ENCODE measurements at regions of chr3 and their contacts with region 1.

Region 1: DNA sequence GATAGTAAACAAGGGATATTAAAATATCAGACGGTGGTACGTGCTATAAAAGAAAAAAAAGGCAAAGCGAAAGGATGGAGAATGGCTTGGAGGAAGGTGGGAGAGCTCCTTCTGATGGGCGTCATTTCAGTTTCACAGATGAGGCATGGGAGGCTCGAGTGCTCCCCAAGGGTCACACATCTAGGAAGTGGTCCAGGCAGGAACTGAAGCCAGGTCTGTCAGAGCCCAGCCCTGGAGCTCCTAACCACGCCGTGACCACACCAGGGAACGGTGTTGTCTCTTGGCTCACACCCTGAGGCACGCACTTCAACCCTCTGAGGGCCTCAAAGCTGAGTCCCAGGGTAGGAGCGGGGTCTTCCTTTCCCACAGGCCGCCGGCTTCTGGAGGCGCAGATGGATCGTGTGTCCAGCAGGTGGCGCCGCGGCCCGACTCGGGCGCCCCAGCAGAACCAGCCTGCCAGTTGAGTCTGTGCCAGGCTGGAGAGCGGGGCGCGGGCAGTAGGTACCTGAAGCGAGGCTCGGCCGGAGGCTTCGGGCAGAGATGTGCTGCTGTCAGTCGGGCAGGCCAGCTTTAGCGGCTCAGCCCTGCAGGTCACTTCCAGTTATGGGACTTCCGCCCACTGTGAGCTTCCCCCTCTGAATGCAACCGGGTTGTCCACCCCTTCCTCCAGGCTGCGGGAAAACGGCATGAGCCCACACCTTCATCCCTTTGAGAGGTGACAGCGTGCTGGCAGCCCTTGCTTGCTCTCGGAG is 68.1 kb downstream of the SLC6A1 start:
- DNase-seq: peak; percentile 50
- ATAC-seq: peak; percentile 69
- H3K4me3 ChIP-seq: 0 out of 2 replicates have a peak overlapping the region, but pooled peaks have one; percentile 9
- H3K27ac ChIP-seq: no peak overlapping the region
- H3K4me1 ChIP-seq: peaks cover 4% of the 10 kb centered on the region; the same call in 1 of the 2 replicates
- H3K27me3 ChIP-seq: peaks cover 12% of the 10 kb centered on the region
- CTCF ChIP-seq: peak; percentile 89
- POLR2A ChIP-seq: no peak
- RAD21 ChIP-seq: peak; percentile 92

Region 2: GRCh38 chr3:9416139-9416780 is 1644.4 kb before region 1 on chr3:
- CTCF ChIA-PET with region 1: no interaction called
- POLR2A ChIA-PET with region 1: no interaction called
- dilution Hi-C with region 1: no loop called
- in situ Hi-C with region 1: no loop called
- intact Hi-C with region 1: no loop called
- DNase-seq: peak; percentile 43
- ATAC-seq: peak; percentile 71
- H3K4me3 ChIP-seq: no peak overlapping the region
- H3K27ac ChIP-seq: peak overlapping the region; percentile 41; the same call in 1 of the 2 replicates
- H3K4me1 ChIP-seq: peaks cover 11% of the 10 kb centered on the region
- H3K27me3 ChIP-seq: no peaks in the 10 kb centered on the region
- CTCF ChIP-seq: no peak
- POLR2A ChIP-seq: no peak
- RAD21 ChIP-seq: no peak

Region 3: DNA sequence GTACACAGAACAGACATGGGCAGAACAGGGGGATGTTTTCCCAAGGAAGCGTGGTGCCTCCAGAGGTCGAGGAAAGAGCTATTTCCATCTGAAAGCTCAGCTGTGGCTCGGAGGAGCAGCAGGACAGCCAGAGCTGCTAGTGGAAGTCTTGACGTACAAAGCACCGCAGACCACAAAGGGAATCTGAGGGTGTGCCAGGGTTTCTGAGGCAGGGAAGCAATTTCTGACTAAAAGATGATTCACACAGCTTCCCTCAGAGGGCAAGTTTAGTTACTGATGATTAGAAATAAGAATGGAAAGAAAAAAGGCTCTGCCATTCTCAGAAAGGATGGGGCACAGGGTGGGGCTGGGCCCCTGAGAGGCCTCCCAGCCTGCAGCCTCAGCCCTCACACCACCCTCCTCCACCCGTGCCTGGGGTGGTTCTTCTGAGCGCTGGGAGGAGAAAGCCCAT is 694.0 kb before region 1 on chr3:
- CTCF ChIA-PET with region 1: no interaction called
- POLR2A ChIA-PET with region 1: no interaction called
- dilution Hi-C with region 1: no loop called
- in situ Hi-C with region 1: no loop called
- intact Hi-C with region 1: no loop called
- DNase-seq: peak; percentile 100
- ATAC-seq: peak; percentile 86
- H3K4me3 ChIP-seq: no peak overlapping the region
- H3K27ac ChIP-seq: peak overlapping the region; percentile 42
- H3K4me1 ChIP-seq: peaks cover 21% of the 10 kb centered on the region
- H3K27me3 ChIP-seq: no peaks in the 10 kb centered on the region
- CTCF ChIP-seq: 0 out of 2 replicates have a peak, but pooled peaks have one; percentile 23
- POLR2A ChIP-seq: 0 out of 2 replicates have a peak, but pooled peaks have one; percentile 22
- RAD21 ChIP-seq: peak; percentile 37

Region 4: GRCh38 chr3:10758304-10759061 is 302.2 kb before region 1 on chr3:
- CTCF ChIA-PET with region 1: interaction called, 13 read pairs
- POLR2A ChIA-PET with region 1: no interaction called
- dilution Hi-C with region 1: no loop called
- in situ Hi-C with region 1: loop called (anchors 5 kb)
- intact Hi-C with region 1: loop called (anchors 1 kb)
- DNase-seq: peak; percentile 66
- ATAC-seq: peak; percentile 98
- H3K4me3 ChIP-seq: no peak overlapping the region
- H3K27ac ChIP-seq: no peak overlapping the region
- H3K4me1 ChIP-seq: no peaks in the 10 kb centered on the region
- H3K27me3 ChIP-seq: peaks cover 4% of the 10 kb centered on the region; the same call in 1 of the 2 replicates
- CTCF ChIP-seq: peak; percentile 84
- POLR2A ChIP-seq: no peak
- RAD21 ChIP-seq: peak; percentile 85

Region 5: DNA sequence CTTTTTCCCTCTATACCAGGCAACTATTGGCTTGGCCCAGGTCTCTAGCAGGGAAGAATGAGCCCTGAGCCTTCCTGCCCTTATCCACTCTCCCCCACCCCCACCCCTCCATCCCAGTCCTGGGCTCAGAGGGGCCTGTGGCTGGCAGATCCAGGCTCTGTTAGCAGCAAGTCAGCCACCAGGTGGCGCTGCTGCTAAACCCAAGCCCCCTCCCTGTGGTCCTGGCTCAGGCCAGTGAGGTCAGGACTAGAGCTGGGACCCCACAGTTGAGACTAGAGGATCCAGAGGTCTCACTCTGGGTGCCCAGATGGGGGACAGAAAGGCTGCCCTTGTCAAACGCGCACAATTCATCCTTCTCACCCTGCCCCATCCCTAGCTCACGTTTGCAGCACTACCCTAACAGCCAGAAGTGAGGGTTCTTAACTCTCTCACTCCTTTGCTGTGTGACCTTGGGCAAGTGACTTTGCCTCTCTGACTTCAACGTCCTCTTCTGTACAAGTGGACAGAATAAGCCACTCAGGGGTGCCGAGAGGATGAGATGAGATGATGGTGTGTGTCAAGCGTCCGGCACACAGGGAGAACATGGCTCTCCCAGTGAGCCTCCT is 114.9 kb before region 1 on chr3:
- CTCF ChIA-PET with region 1: interaction called, 4 read pairs
- POLR2A ChIA-PET with region 1: no interaction called
- dilution Hi-C with region 1: no loop called
- in situ Hi-C with region 1: loop called (anchors 5 kb)
- intact Hi-C with region 1: loop called (anchors 1 kb)
- DNase-seq: peak; percentile 25
- ATAC-seq: peak; percentile 88
- H3K4me3 ChIP-seq: no peak overlapping the region
- H3K27ac ChIP-seq: no peak overlapping the region
- H3K4me1 ChIP-seq: no peaks in the 10 kb centered on the region
- H3K27me3 ChIP-seq: peaks cover 13% of the 10 kb centered on the region
- CTCF ChIP-seq: peak; percentile 66
- POLR2A ChIP-seq: no peak
- RAD21 ChIP-seq: peak; percentile 58

Region 6: GRCh38 chr3:11211531-11212298 is 151.0 kb after region 1 on chr3:
- CTCF ChIA-PET with region 1: interaction called, 3 read pairs
- POLR2A ChIA-PET with region 1: no interaction called
- dilution Hi-C with region 1: no loop called
- in situ Hi-C with region 1: no loop called
- intact Hi-C with region 1: loop called (anchors 5 kb)
- DNase-seq: peak; percentile 46
- ATAC-seq: peak; percentile 43
- H3K4me3 ChIP-seq: no peak overlapping the region
- H3K27ac ChIP-seq: peak overlapping the region; percentile 51
- H3K4me1 ChIP-seq: peaks cover 19% of the 10 kb centered on the region
- H3K27me3 ChIP-seq: no peaks in the 10 kb centered on the region
- CTCF ChIP-seq: peak; percentile 34
- POLR2A ChIP-seq: no peak
- RAD21 ChIP-seq: peak; percentile 31; the same call in 1 of the 2 replicates

Region 7: DNA sequence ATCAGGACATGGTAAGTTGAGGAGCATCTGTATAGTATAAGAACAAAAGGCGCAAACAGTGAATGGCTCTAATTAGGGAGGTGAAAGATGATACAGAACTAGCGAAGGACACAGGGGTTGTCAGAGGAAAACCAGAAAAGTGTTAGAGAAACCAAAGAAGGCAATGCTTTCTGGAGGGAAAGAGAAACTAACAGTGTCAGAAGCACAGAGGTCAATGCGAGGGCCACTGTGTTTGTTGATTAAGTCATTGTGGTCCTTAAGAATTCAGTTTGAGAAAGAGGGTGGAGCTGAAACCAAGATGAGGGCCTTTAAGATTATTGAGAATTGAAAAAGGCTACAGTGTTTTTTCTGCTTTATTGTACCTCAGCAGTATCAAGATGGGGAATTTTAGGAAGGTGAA is 240.3 kb after region 1 on chr3:
- CTCF ChIA-PET with region 1: no interaction called
- POLR2A ChIA-PET with region 1: no interaction called
- dilution Hi-C with region 1: no loop called
- in situ Hi-C with region 1: no loop called
- intact Hi-C with region 1: no loop called
- DNase-seq: peak; percentile 59
- ATAC-seq: peak; percentile 79
- H3K4me3 ChIP-seq: no peak overlapping the region
- H3K27ac ChIP-seq: no peak overlapping the region
- H3K4me1 ChIP-seq: peaks cover 4% of the 10 kb centered on the region; the same call in 1 of the 2 replicates
- H3K27me3 ChIP-seq: no peaks in the 10 kb centered on the region
- CTCF ChIP-seq: no peak
- POLR2A ChIP-seq: no peak
- RAD21 ChIP-seq: no peak

Region 8: GRCh38 chr3:11651900-11652299 is 591.2 kb after region 1 on chr3:
- CTCF ChIA-PET with region 1: no interaction called
- POLR2A ChIA-PET with region 1: no interaction called
- dilution Hi-C with region 1: no loop called
- in situ Hi-C with region 1: loop called (anchors 10 kb)
- intact Hi-C with region 1: loop called (anchors 1 kb)
- DNase-seq: peak; percentile 63
- ATAC-seq: peak; percentile 70
- H3K4me3 ChIP-seq: no peak overlapping the region
- H3K27ac ChIP-seq: no peak overlapping the region; the same call in 1 of the 2 replicates
- H3K4me1 ChIP-seq: no peaks in the 10 kb centered on the region
- H3K27me3 ChIP-seq: no peaks in the 10 kb centered on the region
- CTCF ChIP-seq: peak; percentile 55
- POLR2A ChIP-seq: no peak
- RAD21 ChIP-seq: peak; percentile 58

Measured in IMR-90 (cell line).